ENCODE measurements at regions of chr15 and their contacts with region 1.

Region 1: DNA sequence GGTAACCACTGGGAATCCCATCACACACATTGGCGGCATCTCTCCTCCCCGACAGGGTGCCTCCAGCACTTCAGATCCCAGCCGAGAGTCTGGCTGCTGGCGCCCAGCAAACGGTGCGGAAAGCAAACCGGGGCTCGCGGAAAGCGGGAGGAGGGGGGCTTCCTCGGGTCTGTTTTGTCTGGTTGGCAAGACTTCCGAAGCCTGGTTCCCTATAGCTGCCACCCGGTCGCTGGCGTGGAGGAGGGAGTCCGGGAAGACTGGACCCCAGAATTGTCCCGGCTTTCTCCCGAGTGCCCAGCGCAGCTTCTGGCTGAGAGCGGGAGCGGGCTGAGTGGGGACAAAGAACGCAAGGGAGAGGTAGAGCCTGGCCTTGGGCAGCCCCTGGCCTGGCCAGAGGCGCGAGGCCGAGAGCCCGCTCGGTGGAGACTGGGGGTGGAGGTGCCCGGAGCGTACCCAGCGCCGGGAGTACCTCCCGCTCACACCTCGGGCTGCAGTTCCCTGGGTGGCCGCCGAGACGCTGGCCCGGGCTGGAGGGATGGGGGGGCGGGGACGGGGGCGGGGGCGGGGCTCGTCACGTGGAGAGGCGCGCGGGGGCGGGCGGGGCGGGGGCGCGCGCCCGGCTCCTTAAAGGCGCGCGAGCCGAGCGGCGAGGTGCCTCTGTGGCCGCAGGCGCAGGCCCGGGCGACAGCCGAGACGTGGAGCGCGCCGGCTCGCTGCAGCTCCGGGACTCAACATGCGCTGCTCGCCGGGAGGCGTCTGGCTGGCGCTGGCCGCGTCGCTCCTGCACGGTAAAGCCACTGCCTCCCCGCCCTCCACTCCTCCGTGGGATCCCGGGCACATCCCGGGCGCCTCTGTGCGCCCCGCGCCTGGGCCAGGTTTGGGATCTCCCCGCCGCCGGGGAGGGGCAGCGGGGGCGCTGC is at the start of gene CHRNA7:
- DNase-seq: peak; percentile 81
- ATAC-seq: peak; percentile 89
- total RNA-seq, gene CHRNA7: 1.2 TPM

Region 2: DNA sequence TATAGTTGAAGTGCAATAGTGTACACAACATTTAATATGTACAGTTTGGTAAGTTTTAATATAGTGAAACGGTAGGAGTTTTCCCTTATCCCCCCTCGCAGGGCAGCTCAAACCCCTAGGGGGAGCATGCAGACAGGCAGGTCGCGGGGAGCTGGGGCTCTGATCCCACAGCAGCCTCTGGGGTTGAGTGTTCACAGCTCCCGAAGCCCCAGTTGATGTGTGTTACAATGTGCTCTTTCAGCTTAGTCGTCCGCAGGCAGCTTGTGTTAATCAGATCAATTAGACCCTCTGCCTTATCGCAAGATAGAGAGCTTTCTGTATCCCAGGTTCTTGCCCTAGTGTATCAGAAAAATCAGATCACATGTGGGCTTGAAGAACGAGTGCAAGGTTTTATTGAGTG is 142.9 kb before region 1 on chr15:
- intact Hi-C with region 1: no loop called
- DNase-seq: no peak
- ATAC-seq: no peak

Region 3: DNA sequence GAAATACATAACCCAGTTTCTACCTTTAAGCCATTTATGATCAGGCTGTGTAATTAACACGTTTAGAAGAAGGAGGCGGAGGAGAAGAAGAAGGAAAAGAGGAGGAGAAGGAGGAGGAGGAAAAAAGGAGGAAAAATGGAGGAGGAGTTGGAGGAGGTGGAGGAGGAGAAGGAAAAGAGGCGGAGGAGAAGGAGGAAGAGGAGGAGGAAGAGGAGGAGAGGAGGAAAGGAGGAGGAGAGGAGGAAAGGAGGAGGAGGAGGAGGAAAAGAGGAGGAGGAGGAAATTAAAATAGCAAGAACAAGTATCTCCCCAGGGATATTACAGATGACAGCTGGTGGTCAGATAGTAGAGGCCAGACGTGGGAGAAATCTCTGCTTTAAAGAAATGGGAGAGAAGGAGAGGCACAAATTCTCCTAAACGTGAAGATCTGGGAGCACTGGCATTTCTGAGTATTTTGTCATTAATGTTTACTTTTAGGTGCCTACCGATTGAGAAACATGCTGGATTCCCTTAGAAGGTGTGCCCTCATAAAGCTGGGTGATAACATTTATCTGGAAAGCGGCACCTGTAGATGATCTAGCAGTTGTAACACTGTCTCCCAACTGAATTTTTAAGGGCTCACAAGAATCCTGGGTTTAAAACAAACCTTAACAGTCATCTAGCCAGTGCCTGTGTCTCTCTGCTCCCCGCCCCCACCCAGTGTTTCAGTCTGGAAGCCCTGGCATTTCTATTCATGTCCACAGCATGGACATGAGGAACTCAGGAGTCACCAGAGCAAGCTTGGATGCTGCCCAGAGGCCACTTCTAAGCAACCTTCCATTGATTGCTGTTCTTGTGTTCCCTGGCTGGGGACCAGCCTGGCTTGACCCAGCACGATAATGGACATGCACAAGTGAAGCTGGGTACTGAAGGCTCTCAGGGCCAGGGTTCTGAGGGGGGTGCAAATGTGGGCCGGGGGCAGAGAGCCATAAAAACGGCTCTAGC is 75.4 kb after region 1 on chr15:
- intact Hi-C with region 1: loop called (anchors 5 kb)
- DNase-seq: peak; percentile 74
- ATAC-seq: peak; percentile 93